ENCODE measurements at regions of chr9 and their contacts with region 1.

Region 1: DNA sequence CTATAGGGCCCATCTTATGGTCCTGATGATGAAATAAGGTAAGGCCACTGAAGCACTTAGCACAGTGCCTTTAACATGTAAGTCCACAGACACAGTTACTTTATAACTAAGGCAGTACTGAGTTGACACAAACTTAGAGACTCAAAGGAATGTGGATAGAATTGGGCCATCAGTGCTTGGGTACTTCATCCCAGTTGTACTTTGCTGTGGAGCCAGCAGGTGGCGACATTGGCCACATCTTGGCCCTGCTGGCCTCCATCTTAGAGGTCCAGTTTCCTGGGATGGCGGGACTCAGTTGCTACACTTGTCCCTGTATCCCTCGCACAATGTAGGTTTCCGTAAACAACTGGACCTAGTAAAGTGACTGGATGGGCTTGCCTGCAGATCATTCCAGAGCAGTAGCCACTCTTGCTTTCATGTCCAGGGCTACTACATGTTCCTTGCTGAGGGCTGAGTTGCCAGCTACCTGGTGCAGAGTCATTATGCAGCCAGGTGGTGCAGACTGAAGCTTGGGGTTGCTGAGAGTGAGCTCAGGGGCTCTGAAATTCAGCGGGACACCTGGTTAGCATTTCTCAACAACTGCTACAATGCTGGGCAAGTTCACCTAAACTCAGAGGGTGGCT is 10.6 kb downstream of the MTAP start:
- DNase-seq: peak in 33 of 35 experiments; percentile 23 to 82 (median 50)
- ATAC-seq: peak; percentile 68 to 80 (median 74)
- H3K4me3 ChIP-seq: no peak overlapping the region
- H3K4me3 Mint-ChIP-seq: no peak overlapping the region
- H3K27ac ChIP-seq: peak overlapping the region; percentile 55
- H3K27ac Mint-ChIP-seq: peak overlapping the region in 1 of 2 donors; percentile 22
- H3K4me1 ChIP-seq: peaks cover 5 to 11% of the 10 kb centered on the region in 2 experiments
- H3K4me1 Mint-ChIP-seq: peaks cover 6 to 25% (median 16%) of the 10 kb centered on the region in 3 donors
- H3K27me3 ChIP-seq: no peaks in the 10 kb centered on the region
- H3K27me3 Mint-ChIP-seq: no peaks in the 10 kb centered on the region

Region 2: GRCh38 chr9:21840647-21841046 is 27.6 kb after region 1 on chr9:
- CTCF ChIA-PET with region 1: interaction called, 3 to 10 read pairs
- POLR2A ChIA-PET with region 1: no interaction called
- DNase-seq: no peak
- ATAC-seq: no peak
- H3K4me3 ChIP-seq: no peak overlapping the region
- H3K4me3 Mint-ChIP-seq: no peak overlapping the region
- H3K27ac ChIP-seq: no peak overlapping the region
- H3K27ac Mint-ChIP-seq: no peak overlapping the region
- H3K4me1 ChIP-seq: no peaks in the 10 kb centered on the region
- H3K4me1 Mint-ChIP-seq: peaks cover 6 to 10% (median 8%) of the 10 kb centered on the region in 3 donors
- H3K27me3 ChIP-seq: no peaks in the 10 kb centered on the region
- H3K27me3 Mint-ChIP-seq: no peaks in the 10 kb centered on the region

Region 3: GRCh38 chr9:22008736-22009562 is 195.9 kb after region 1 on chr9 and contains the start of gene CDKN2B:
- CTCF ChIA-PET with region 1: interaction called, 10 to 55 read pairs
- POLR2A ChIA-PET with region 1: interaction called, 3 read pairs
- DNase-seq: peak in 25 of 35 experiments; percentile 23 to 80 (median 45)
- ATAC-seq: peak; percentile 70 to 80 (median 73)
- H3K4me3 ChIP-seq: peak within 1 kb of the TSS; percentile 61 to 77
- H3K4me3 Mint-ChIP-seq: peak within 1 kb of the TSS; percentile 68 to 85 (median 81)
- H3K27ac ChIP-seq: no peak within 1 kb of the TSS
- H3K27ac Mint-ChIP-seq: peak within 1 kb of the TSS in 1 of 2 donors; percentile 46
- H3K4me1 ChIP-seq: peaks cover 9 to 24% of the 10 kb centered on the region in 2 experiments
- H3K4me1 Mint-ChIP-seq: peaks cover 22 to 34% (median 26%) of the 10 kb centered on the region in 3 donors
- H3K27me3 ChIP-seq: peaks cover 30 to 39% of the 10 kb centered on the region in 2 experiments
- H3K27me3 Mint-ChIP-seq: peaks cover 57 to 58% of the 10 kb centered on the region in 2 donors
- total RNA-seq, gene CDKN2B: 0.33 to 4.4 (median 1.4) TPM

Region 4: DNA sequence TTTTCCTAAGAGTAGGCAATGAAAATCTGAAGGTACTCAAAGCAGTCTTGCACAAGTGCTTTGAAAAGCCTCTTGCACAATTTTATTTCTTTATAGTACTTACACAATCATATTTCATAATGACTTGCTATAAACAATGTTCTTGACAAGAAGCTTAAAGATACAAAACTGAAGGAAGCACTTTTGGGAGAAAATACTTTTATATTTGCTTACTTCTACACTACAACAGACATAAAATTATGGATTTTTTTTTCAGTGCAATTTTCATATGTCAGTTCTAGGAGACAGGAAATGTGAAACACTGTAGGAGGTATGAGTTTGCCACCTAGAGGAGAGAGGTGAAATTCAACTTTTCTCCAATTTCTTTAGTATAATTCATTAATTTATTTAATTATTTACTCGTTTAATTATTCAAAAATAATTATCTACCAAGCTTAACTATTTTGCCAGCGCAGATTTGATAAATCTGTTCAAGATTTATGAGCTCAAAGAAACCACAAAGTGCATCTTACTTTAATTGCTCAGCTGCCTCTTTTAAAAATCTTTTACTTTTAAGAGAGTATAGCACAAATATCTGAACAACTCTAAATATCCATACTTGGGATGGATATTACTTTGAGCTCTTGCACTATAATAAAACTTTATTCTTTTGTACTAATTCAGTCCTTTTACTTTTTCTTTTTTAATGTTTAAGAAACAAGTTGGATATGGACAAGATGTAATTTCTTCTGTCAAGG is 225.1 kb after region 1 on chr9:
- CTCF ChIA-PET with region 1: interaction called, 56 to 69 read pairs
- POLR2A ChIA-PET with region 1: no interaction called
- DNase-seq: peak in 1 of 35 experiments; percentile 50
- ATAC-seq: peak in 2 of 4 experiments; percentile 55 to 58
- H3K4me3 ChIP-seq: no peak overlapping the region
- H3K4me3 Mint-ChIP-seq: no peak overlapping the region
- H3K27ac ChIP-seq: no peak overlapping the region
- H3K27ac Mint-ChIP-seq: no peak overlapping the region
- H3K4me1 ChIP-seq: no peaks in the 10 kb centered on the region
- H3K4me1 Mint-ChIP-seq: peaks cover 0 to 28% (median 19%) of the 10 kb centered on the region in 3 donors
- H3K27me3 ChIP-seq: no peaks in the 10 kb centered on the region
- H3K27me3 Mint-ChIP-seq: peaks cover 0 to 1% of the 10 kb centered on the region in 2 donors

Region 5: GRCh38 chr9:22119537-22120158 is 306.6 kb after region 1 on chr9:
- CTCF ChIA-PET with region 1: interaction called, 8 to 25 read pairs
- POLR2A ChIA-PET with region 1: no interaction called
- DNase-seq: peak in 4 of 35 experiments; percentile 1 to 39 (median 2)
- ATAC-seq: peak in 3 of 4 experiments; percentile 52 to 74 (median 56)
- H3K4me3 ChIP-seq: no peak overlapping the region
- H3K4me3 Mint-ChIP-seq: no peak overlapping the region
- H3K27ac ChIP-seq: no peak overlapping the region
- H3K27ac Mint-ChIP-seq: no peak overlapping the region
- H3K4me1 ChIP-seq: no peaks in the 10 kb centered on the region
- H3K4me1 Mint-ChIP-seq: peaks cover 0 to 21% (median 14%) of the 10 kb centered on the region in 3 donors
- H3K27me3 ChIP-seq: peaks cover 0 to 2% of the 10 kb centered on the region in 2 experiments
- H3K27me3 Mint-ChIP-seq: peaks cover 5 to 6% of the 10 kb centered on the region in 2 donors

Region 6: DNA sequence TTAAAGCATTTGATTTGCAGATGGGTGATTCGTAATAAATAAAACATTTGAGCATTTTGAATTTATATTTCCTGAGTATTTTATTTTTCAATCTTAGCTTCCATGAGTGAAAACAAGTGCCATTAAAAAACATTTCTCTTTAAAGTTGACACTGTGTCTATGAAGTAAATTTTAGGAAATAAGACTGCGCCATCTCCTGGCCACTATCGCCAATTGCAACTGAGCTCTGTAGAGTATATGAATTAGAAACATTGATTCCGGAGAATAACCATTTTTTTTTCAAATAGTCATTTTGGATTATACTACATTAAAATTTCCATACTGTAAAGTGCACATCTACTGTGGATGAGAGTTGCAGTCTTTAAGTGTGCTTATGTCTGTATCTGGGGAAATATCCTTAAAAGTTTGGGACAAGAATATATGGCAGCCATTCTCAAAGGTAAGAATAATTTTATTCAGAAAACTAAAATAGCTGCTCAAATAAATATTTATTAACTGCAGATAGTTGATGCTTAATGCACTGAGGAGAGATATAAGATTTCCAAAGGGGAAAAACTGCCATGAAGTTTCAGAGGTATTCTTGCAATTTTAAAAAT is 639.5 kb after region 1 on chr9:
- CTCF ChIA-PET with region 1: interaction called, 11 to 41 read pairs
- POLR2A ChIA-PET with region 1: no interaction called
- DNase-seq: peak in 18 of 35 experiments; percentile 10 to 57 (median 27)
- ATAC-seq: peak in 1 of 4 experiments; percentile 42
- H3K4me3 ChIP-seq: no peak overlapping the region
- H3K4me3 Mint-ChIP-seq: no peak overlapping the region
- H3K27ac ChIP-seq: no peak overlapping the region
- H3K27ac Mint-ChIP-seq: no peak overlapping the region
- H3K4me1 ChIP-seq: peaks cover 0 to under 1% of the 10 kb centered on the region in 2 experiments
- H3K4me1 Mint-ChIP-seq: peaks cover 0 to 6% (median 6%) of the 10 kb centered on the region in 3 donors
- H3K27me3 ChIP-seq: peaks cover 3 to 4% of the 10 kb centered on the region in 2 experiments
- H3K27me3 Mint-ChIP-seq: peaks cover 31 to 34% of the 10 kb centered on the region in 2 donors